Activated CD4-positive, alpha-beta T cell treated with anti-CD3 and anti-CD28 coated beads, Interleukin-2, amount 10 ng/mL, durations not matched to agents 24 days and 14 days (primary cell): ENCODE measurements at regions of chr12 and their contacts with region 1.

Region 1: DNA sequence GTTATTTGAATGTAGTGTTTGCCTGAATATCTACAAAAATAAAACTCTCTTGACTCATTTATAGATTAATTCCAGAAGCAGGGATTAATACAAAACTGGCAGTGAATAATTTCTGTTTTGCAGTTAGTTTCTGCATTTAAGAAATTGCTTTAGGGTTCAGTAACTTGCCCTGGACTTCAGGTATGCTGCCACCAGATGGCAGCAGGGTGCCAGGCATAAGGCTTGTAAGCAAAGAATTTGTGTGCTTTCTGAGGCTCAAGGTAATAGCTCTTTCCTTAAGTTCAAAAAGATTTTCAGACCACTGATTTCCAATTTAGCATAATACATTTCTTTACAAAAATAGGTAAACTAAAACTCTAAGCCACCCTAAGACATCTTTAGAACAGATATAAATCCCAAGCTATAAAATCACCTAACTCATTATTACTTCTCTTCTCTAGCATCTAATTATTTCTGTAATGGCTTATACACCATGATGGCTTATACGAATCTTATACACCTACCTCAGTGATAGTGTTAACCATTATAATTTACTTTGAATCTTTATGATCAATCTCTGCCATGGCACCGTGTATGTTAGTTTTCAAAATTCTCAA is 398.3 kb downstream of the APAF1 start:
- DNase-seq: peak; percentile 82
- H3K4me3 Mint-ChIP-seq: no peak overlapping the region
- H3K27ac Mint-ChIP-seq: no peak overlapping the region
- H3K4me1 Mint-ChIP-seq: no peaks in the 10 kb centered on the region
- H3K27me3 Mint-ChIP-seq: no peaks in the 10 kb centered on the region

Region 2: GRCh38 chr12:98595243-98595988 is 448.0 kb before region 1 on chr12:
- intact Hi-C with region 1: no loop called
- DNase-seq: peak; percentile 63
- H3K4me3 Mint-ChIP-seq: peak overlapping the region; percentile 98
- H3K27ac Mint-ChIP-seq: peak overlapping the region; percentile 99
- H3K4me1 Mint-ChIP-seq: peaks cover 21% of the 10 kb centered on the region
- H3K27me3 Mint-ChIP-seq: peaks cover 1% of the 10 kb centered on the region

Region 3: GRCh38 chr12:99619389-99620158 is 576.2 kb after region 1 on chr12:
- intact Hi-C with region 1: loop called (anchors 1 kb)
- DNase-seq: peak; percentile 66
- H3K4me3 Mint-ChIP-seq: no peak overlapping the region
- H3K27ac Mint-ChIP-seq: no peak overlapping the region
- H3K4me1 Mint-ChIP-seq: no peaks in the 10 kb centered on the region
- H3K27me3 Mint-ChIP-seq: no peaks in the 10 kb centered on the region

Region 4: DNA sequence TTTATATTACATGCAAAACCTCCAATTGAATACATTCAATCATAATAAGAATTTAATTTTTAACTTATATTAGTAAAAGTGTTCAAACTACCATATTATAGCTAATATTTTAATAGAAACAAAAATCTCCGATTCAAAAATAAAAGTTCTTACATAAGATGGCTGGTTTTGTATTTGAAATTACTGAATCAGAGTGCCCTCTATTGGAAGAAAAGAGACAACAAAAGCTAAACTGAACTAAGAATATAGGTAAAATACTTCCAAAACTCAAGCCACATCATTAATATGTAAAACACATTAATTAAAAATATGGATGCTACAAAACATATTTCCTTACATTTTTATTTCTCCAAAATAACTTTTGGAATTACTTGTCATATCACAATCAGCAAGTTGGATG is 724.4 kb after region 1 on chr12:
- intact Hi-C with region 1: loop called (anchors 2 kb)
- DNase-seq: no peak
- H3K4me3 Mint-ChIP-seq: no peak overlapping the region
- H3K27ac Mint-ChIP-seq: no peak overlapping the region
- H3K4me1 Mint-ChIP-seq: no peaks in the 10 kb centered on the region
- H3K27me3 Mint-ChIP-seq: no peaks in the 10 kb centered on the region

Region 5: DNA sequence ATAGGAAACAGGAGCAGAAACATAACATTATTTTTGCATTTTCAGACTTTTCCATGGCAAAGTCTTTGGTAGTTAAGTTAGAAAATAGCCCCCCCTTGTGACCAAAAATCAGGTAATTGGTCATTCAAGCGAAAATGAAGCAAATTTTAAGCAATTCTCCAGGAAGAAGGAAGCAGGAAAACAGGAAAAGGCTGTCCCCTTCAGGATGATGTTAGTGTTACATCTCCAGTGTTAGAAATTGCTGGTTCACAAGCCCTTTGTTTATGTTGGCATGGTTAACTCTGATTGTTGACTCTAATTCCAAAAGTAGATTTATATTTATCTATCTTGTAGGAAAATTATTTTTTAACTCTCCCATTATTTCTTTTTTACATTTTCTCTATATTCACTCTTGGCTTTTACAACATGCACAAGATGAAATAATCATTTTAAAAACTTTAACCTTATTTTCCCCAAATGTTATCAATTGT is 1511.2 kb after region 1 on chr12:
- intact Hi-C with region 1: loop called (anchors 5 kb)
- DNase-seq: peak; percentile 58
- H3K4me3 Mint-ChIP-seq: no peak overlapping the region
- H3K27ac Mint-ChIP-seq: no peak overlapping the region
- H3K4me1 Mint-ChIP-seq: no peaks in the 10 kb centered on the region
- H3K27me3 Mint-ChIP-seq: peaks cover 5% of the 10 kb centered on the region